Right ventricle myocardium inferior (tissue), 1 donor: ENCODE measurements at regions of chr15 and their contacts with region 1.

Region 1: GRCh38 chr15:52780172-52780980 is 9.8 kb downstream of the ONECUT1 start:
- DNase-seq: no peak
- ATAC-seq: peak; percentile 50

Region 2: GRCh38 chr15:52805351-52806283 is 25.2 kb after region 1 on chr15:
- intact Hi-C with region 1: no loop called
- DNase-seq: no peak
- ATAC-seq: no peak

Region 3: DNA sequence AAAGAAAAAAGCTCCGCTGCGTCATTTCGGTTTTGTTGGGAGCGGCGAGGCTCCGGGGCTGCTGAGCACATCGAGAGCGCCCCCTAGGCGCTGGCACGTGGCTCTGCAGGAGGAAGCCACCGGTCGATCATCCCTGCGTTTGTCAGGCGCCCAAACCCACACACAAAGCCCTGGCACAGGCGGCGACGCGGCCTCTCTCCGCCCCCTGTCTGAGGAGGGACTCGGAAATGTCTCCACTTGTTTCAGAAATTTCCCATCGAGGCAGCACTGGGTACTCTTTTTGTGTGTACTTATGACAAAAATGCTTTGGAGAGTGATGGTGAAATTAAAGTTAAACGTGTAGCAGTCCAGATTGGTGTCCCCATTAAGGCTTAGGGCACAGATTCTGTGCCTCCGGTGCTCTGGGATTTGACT is 417.1 kb after region 1 on chr15:
- intact Hi-C with region 1: loop called (anchors 5 kb)
- DNase-seq: peak; percentile 70
- ATAC-seq: no peak

Region 4: DNA sequence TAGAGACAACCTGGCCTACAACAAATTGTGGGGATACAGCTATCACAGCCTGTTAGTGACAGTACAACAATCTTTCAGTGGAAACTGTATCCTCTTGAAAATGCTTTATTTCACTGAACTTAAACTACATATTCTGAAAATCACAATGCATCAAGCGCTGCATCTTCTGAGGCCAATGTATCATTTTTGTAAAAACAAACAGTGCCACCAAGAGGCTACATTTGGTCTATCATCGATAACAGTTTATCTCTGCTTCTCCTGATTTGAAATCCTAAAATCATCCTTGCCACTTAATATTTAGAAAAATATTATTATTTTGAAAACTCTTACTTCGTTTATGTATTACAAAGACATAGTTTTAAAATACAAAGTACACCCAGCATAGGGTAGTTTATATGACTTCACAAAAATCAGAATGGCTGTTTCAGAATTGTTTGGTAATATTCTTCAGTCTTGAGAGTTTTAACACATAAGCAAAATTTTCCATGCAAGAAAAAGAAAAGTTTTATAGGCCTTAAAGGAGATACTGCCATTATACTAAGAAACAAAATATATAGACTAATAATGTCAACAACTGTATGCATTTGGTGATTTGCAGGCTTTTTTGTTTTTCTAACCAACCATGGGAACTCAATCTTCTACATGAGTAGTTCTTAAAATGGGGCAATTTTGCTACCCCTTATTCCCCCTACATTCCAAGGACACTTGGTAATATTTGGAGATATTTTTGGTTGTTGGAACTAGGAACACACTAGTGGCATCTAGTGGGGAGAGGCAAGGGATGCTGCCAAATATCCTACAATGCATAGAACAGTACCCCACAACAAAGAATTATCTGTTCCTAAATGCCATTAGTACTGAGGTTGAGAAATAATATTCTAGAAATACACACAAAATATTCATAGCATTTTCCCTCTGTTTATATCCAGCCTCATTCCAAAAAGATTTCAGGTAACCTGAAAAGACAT is 936.8 kb after region 1 on chr15:
- intact Hi-C with region 1: loop called (anchors 5 kb)
- DNase-seq: no peak
- ATAC-seq: no peak